ENCODE measurements at regions of chr3 and their contacts with region 1.

Region 1: DNA sequence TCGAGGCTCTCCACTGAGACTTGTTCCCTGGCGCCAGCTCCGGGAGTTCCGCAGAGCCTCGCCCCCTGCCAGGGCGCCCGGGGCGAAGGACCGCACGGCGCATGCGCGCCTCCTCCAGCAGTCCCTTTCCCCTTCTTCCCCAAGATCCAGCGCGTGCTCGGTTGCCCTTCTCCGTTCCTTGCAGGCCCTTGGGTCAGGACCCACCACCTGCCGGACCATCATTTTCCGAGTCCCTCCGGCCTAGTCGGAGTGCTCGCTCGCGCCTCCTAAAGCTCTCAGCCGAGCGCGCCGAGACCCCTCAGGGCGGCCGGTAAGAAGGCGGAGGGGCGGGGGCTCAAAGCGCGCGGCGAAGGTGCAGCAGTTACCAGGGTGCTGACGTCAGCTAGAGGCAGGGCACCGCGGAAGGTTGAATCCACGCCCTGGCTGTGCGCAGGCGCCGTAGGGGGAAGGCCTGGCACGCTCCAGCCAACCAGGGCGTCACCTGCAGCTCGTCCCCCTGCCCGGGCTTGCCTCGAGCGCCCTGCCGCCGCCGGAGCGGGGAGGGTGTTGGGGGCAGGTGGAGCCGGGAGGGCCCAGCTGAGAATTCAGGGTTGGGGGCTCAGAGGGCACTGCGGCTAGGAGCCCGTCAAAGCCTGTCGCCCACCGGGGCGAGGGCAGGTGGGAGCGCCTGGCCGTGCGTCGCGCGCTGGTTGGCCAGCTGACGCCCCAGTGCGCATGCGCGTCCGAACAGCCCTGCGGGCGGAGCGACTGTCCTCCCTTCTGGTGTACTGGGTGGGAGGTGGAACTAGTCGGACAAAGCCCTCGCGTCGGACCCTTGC is at the start of gene TCAIM:
- DNase-seq: peak; percentile 98 to 100 (median 99)
- ATAC-seq: peak; percentile 92
- H3K4me3 ChIP-seq: peak within 1 kb of the TSS; percentile 69
- H3K4me3 Mint-ChIP-seq: peak within 1 kb of the TSS; percentile 93
- H3K27ac ChIP-seq: peak within 1 kb of the TSS; percentile 91 to 92
- H3K27ac Mint-ChIP-seq: peak within 1 kb of the TSS; percentile 95
- H3K4me1 ChIP-seq: peaks cover 17% of the 10 kb centered on the region
- H3K4me1 Mint-ChIP-seq: peaks cover 32% of the 10 kb centered on the region
- H3K27me3 ChIP-seq: no peaks in the 10 kb centered on the region
- H3K27me3 Mint-ChIP-seq: peaks cover 12% of the 10 kb centered on the region
- CTCF ChIP-seq: no peak
- total RNA-seq, gene TCAIM: 2.9 to 4.2 TPM

Region 2: DNA sequence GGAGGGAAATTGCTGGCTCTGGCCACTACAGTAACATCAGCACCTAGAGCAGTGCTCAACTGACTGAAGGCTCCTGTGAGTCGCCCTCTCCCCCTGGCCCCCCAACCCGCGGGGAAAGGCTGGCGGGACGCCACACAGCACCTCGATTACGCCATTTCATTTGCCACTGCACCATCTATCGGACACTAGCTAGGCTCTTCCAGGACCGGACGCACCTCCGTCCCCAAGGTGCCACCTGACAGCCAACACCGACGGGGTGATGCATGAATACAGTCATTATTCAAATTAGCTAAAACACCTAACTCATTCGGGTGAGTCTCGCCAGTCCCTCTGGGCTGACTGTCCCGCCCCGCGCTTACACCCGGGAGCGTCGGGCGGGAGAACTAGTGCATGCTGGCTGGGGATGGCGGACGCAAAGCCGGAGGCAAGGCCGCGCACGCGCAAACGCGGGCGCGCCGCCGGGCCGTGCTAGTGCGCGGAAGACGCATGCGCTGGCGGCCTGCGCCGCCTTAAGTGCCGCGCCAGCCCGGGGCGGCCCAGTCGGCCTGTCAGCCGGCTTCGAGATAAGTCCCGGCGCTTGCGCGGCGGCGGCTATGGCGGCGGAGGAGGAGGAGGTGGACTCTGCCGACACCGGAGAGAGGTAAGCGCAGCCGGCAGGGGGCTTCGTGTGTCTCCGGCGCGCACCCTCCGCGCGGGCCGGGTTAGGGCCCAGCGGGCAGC is 647.7 kb before region 1 on chr3 and contains the start of gene ABHD5:
- CTCF ChIA-PET with region 1: no interaction called
- POLR2A ChIA-PET with region 1: no interaction called
- intact Hi-C with region 1: loop called in 1 of 2 experiments (anchors 10 kb)
- DNase-seq: peak; percentile 92 to 99 (median 97)
- ATAC-seq: peak; percentile 92
- H3K4me3 ChIP-seq: peak within 1 kb of the TSS; percentile 64
- H3K4me3 Mint-ChIP-seq: peak within 1 kb of the TSS; percentile 96
- H3K27ac ChIP-seq: peak within 1 kb of the TSS; percentile 59 to 67
- H3K27ac Mint-ChIP-seq: peak within 1 kb of the TSS; percentile 93
- H3K4me1 ChIP-seq: peaks cover 18% of the 10 kb centered on the region
- H3K4me1 Mint-ChIP-seq: peaks cover 33% of the 10 kb centered on the region
- H3K27me3 ChIP-seq: no peaks in the 10 kb centered on the region
- H3K27me3 Mint-ChIP-seq: no peaks in the 10 kb centered on the region
- CTCF ChIP-seq: peak; percentile 48
- total RNA-seq, gene ABHD5: 6.4 to 9.3 TPM

Region 3: DNA sequence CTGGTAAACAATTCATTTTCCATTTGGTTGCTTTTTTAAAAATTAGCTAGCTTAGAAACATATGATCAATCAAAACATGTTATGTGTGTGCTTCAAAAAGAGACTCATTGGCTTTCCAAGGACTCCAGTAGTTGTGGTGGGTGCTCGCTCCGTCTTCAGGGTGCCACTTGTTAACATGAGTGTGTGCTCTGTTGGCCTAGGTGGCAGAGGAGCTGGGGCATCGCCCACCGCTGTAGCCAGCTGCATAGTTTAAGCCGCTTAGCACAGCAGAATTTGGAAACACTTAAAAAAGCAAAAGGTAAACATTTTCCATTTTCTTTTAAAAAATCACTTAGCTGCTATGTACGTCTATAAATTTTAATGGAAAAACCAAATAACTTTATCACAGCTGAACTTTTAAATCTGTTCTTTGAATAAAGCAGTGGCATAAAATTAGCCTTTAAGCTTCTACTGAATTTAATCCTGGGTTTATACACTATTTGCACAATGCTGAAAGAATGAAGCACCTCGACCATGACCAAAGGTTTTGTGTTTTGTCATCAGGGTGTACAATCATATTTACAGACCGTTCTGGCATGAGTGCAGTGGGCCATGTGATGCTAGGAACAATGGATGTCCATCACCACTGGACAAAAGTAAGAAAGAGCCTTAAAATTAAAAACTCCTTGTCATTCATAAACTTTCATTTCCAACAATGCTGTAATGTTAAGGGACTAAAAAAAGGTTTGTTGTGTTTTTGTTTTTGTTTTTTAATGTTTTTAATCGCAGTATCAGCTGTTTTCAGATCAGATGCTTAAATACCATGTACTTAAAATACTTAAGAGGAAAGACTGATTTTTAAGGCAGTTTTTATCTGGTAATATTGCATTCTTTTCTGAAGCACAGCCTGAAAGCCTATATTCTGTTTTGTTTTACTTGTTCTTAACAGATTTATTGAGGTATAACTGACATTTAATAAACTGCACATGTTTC is 58.3 kb after region 1 on chr3:
- CTCF ChIA-PET with region 1: no interaction called
- POLR2A ChIA-PET with region 1: no interaction called
- intact Hi-C with region 1: no loop called
- DNase-seq: no peak
- ATAC-seq: no peak
- H3K4me3 ChIP-seq: no peak overlapping the region
- H3K4me3 Mint-ChIP-seq: no peak overlapping the region
- H3K27ac ChIP-seq: no peak overlapping the region
- H3K27ac Mint-ChIP-seq: no peak overlapping the region
- H3K4me1 ChIP-seq: no peaks in the 10 kb centered on the region
- H3K4me1 Mint-ChIP-seq: no peaks in the 10 kb centered on the region
- H3K27me3 ChIP-seq: no peaks in the 10 kb centered on the region
- H3K27me3 Mint-ChIP-seq: no peaks in the 10 kb centered on the region
- CTCF ChIP-seq: no peak

Region 4: GRCh38 chr3:44477312-44478030 is 139.3 kb after region 1 on chr3 and contains the start of gene ZNF445:
- CTCF ChIA-PET with region 1: no interaction called
- POLR2A ChIA-PET with region 1: interaction called, 10 read pairs
- intact Hi-C with region 1: loop called (anchors 2 to 10 kb)
- DNase-seq: peak; percentile 53 to 90 (median 72)
- ATAC-seq: peak; percentile 87
- H3K4me3 ChIP-seq: peak within 1 kb of the TSS; percentile 65
- H3K4me3 Mint-ChIP-seq: peak within 1 kb of the TSS; percentile 97
- H3K27ac ChIP-seq: peak within 1 kb of the TSS in 1 of 2 donors; percentile 56
- H3K27ac Mint-ChIP-seq: peak within 1 kb of the TSS; percentile 93
- H3K4me1 ChIP-seq: peaks cover 19% of the 10 kb centered on the region
- H3K4me1 Mint-ChIP-seq: peaks cover 39% of the 10 kb centered on the region
- H3K27me3 ChIP-seq: no peaks in the 10 kb centered on the region
- H3K27me3 Mint-ChIP-seq: no peaks in the 10 kb centered on the region
- CTCF ChIP-seq: no peak
- total RNA-seq, gene ZNF445: 6.1 to 6.6 TPM

Region 5: GRCh38 chr3:44601749-44602148 is 263.5 kb after region 1 on chr3:
- CTCF ChIA-PET with region 1: no interaction called
- POLR2A ChIA-PET with region 1: no interaction called
- intact Hi-C with region 1: no loop called
- DNase-seq: no peak
- ATAC-seq: no peak
- H3K4me3 ChIP-seq: no peak overlapping the region
- H3K4me3 Mint-ChIP-seq: no peak overlapping the region
- H3K27ac ChIP-seq: no peak overlapping the region
- H3K27ac Mint-ChIP-seq: no peak overlapping the region
- H3K4me1 ChIP-seq: no peaks in the 10 kb centered on the region
- H3K4me1 Mint-ChIP-seq: no peaks in the 10 kb centered on the region
- H3K27me3 ChIP-seq: no peaks in the 10 kb centered on the region
- H3K27me3 Mint-ChIP-seq: no peaks in the 10 kb centered on the region
- CTCF ChIP-seq: no peak

Region 6: DNA sequence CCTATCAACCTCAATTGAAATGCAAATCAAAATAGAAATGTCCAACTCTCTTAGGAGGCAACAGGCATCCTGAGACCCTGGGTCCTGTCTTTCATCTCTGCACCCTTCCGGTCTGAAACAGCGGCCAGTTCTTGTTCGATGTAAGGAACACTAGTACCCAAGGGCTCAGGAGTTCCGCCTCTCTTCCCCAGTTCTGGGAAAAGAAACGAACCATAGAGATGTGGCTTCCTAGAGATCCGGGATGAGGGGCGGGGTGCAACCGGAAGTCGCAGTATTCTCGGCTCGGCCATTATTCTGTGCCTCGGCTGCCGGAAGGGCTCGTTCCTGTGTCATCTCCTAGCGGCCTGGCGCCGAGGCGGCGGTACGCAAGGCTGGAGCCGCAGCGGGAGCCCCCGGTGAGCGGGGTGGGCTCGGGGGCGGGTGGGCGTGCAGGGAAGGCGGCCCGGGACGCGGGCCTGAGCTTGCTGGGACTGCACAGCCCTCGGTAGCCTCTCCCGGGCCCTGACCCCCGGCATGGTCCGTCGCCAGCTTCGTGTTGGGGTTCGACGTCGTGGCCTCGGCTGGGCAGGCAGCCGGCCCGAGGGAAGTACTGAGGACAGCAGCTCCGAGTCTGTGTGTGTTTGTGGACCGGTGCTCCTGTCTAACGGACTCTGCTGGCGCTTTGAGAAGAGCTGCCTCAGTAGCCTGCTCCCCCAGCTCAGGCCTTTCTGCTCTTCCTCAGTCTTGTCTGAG is 286.7 kb after region 1 on chr3 and contains the start of gene ZNF197:
- CTCF ChIA-PET with region 1: no interaction called
- POLR2A ChIA-PET with region 1: interaction called, 5 read pairs
- intact Hi-C with region 1: loop called in 1 of 2 experiments (anchors 10 kb)
- DNase-seq: peak; percentile 7 to 70 (median 36)
- ATAC-seq: peak; percentile 56
- H3K4me3 ChIP-seq: peak within 1 kb of the TSS; percentile 93
- H3K4me3 Mint-ChIP-seq: peak within 1 kb of the TSS; percentile 93
- H3K27ac ChIP-seq: no peak within 1 kb of the TSS
- H3K27ac Mint-ChIP-seq: peak within 1 kb of the TSS; percentile 82
- H3K4me1 ChIP-seq: peaks cover 18% of the 10 kb centered on the region
- H3K4me1 Mint-ChIP-seq: peaks cover 54% of the 10 kb centered on the region
- H3K27me3 ChIP-seq: no peaks in the 10 kb centered on the region
- H3K27me3 Mint-ChIP-seq: no peaks in the 10 kb centered on the region
- CTCF ChIP-seq: no peak
- total RNA-seq, gene ZNF197: 3.2 to 3.5 TPM

Region 7: DNA sequence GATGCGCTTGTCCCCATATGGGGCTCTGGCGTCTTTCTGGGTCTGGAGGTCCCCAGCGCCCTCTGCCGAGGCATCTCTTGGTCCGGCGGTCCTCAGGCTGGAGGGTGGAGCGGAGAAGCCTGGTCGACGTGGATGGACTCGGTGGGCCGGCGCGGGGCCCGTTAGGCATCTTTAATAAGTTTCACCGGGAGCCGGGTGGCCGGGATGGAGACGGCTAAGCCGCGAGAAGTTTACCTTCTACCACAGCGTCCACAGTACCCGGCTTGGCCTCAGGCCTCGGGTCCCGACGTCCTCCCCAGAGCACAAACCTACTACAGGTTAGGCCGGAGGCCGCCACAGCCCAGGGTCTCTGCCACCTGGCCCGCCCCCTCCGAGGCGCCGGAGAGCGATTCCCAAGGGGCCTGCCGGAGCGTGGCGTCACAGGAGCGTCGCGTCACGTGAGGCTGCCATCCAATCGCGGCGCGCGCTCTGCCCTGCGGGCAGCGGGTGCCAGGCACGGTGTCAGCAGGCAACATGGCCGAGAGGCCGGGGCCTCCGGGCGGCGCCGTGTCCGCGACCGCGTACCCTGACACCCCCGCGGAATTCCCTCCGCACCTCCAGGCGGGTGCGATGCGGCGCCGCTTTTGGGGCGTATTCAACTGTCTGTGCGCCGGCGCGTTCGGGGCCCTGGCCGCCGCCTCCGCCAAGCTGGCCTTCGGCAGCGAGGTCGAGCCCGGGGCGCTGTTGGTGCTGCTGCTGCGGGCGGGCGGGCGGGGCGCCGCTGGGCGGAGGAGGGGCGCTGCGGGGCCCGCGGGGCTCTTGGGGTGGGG is 523.4 kb after region 1 on chr3 and contains the start of gene TMEM42:
- CTCF ChIA-PET with region 1: no interaction called
- POLR2A ChIA-PET with region 1: interaction called, 6 read pairs
- intact Hi-C with region 1: loop called in 1 of 2 experiments (anchors 5 kb)
- DNase-seq: peak; percentile 72 to 95 (median 82)
- ATAC-seq: peak; percentile 91
- H3K4me3 ChIP-seq: peak within 1 kb of the TSS; percentile 76
- H3K4me3 Mint-ChIP-seq: peak within 1 kb of the TSS; percentile 91
- H3K27ac ChIP-seq: peak within 1 kb of the TSS; percentile 72 to 80
- H3K27ac Mint-ChIP-seq: peak within 1 kb of the TSS; percentile 88
- H3K4me1 ChIP-seq: peaks cover 42% of the 10 kb centered on the region
- H3K4me1 Mint-ChIP-seq: peaks cover 48% of the 10 kb centered on the region
- H3K27me3 ChIP-seq: no peaks in the 10 kb centered on the region
- H3K27me3 Mint-ChIP-seq: no peaks in the 10 kb centered on the region
- CTCF ChIP-seq: no peak
- total RNA-seq, gene TMEM42: 6.8 to 8.0 TPM

Measured in CD4-positive, alpha-beta T cell (primary cell).